Dorsolateral prefrontal cortex (tissue), 120 donors: ENCODE measurements at regions of chr18 and their contacts with region 1.

Region 1: DNA sequence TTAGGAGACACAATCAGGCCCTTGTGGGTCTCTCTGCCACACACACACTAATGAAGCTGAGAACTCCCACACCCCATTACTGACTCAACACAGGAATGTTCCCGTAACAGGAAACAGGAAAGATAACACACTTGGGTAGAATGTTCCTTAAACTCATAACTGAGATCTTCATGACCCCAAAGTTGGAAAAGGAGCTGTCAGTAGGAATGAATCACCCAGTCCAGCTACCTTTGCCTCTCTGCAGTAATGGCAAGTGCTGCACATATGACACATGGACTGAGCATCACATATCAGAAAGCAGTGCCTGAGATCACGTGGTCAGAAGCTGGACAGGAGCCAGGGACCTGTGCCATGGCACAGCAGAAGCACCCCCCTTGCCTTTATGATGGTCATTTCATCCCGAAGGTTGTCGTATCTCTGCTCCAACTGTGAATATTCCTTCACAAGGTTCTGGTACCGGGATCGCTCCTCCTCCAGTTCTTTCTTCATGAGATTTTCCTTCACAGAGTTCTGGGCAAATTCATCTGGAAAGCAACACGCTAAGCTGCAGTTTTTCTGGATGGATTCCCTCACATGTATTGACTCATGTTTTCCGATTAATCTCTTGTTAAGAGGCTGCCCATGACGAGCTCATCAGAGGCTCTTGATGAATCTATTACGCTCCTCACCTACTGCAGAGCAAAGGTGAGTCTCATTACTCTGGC is 65.4 kb upstream of the ACAA2 start:
- DNase-seq: peak in 1 of 10 donors; percentile 49
- H3K4me3 ChIP-seq: no peak overlapping the region
- H3K27ac ChIP-seq: peak overlapping the region in 6 of 59 donors; percentile 3 to 64 (median 25)
- H3K27me3 ChIP-seq: no peaks in the 10 kb centered on the region
- CTCF ChIP-seq: no peak

Region 2: DNA sequence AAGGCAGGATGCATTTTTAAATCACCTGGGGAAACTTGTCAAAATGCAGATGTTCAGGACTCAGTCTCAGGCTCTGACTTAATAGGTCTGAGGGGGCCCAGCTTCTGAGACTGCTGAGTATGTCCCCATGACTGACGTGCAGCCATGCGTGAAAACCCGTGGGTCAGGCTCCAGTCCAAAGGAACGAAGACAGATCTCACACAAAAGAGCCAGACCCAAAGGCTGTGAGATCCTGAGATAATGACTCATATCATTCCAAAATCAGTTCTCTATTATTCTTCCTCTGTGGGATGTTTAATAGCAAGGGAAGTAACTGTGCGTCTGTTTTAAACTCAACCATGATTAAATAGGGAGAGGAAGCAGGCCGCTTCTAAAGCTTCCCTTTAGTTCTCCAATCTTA is 42.0 kb after region 1 on chr18:
- intact Hi-C with region 1: no loop called
- DNase-seq: no peak
- H3K4me3 ChIP-seq: no peak overlapping the region
- H3K27ac ChIP-seq: peak overlapping the region in 2 of 59 donors; percentile 6 to 28
- H3K27me3 ChIP-seq: peaks cover 0 to 12% (median 0%) of the 10 kb centered on the region in 45 donors
- CTCF ChIP-seq: no peak

Region 3: GRCh38 chr18:50099725-50100407 is 221.1 kb after region 1 on chr18:
- intact Hi-C with region 1: loop called in 1 of 2 experiments (anchors 10 kb)
- DNase-seq: no peak
- H3K4me3 ChIP-seq: no peak overlapping the region
- H3K27ac ChIP-seq: peak overlapping the region in 2 of 59 donors; percentile 16 to 29
- H3K27me3 ChIP-seq: peaks cover 0 to 21% (median 0%) of the 10 kb centered on the region in 45 donors
- CTCF ChIP-seq: no peak